ENCODE measurements at regions of chr1 and their contacts with region 1.

Region 1: DNA sequence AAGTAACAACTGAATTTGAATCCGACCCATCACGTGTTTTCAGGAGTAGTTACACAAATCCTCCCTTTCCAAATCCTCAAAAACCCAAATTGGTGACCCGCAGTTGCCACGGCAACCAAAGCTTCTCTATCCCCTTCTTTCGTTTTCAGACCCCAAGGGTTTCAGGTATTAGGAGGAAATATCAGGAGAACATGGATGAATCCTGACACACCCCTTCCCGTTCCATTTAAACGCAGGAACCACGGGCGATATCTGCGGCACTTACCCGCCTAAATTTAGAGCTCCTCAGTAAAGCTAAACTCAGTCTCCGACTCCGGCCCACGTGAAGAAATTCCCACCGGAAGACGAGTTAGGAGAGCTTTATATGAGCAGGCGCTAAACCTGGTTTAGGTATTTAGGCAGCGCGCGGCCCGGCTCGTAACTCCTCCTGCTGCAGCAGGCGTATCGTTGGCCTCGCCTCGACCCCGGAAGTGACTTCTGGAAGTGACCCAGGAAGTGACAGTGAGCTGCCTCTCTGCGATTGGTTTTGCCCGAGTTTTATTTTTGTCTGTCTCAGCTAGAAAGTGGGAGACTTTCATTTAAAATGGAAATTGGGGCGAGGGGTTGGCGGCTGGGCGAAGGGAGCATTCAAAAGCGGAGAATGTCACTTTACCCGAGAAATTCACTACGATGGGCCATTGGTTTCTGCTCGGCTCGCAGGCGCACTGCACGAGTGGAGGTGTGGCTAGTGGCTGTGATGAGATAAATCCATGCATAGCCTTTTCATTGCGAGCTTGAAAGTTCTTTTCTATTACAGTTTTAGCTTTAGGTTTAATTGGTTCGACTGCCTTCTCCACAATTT is at the start of gene TAF1A:
- DNase-seq: peak; percentile 67
- ATAC-seq: peak; percentile 98
- H3K4me3 Mint-ChIP-seq: peak within 1 kb of the TSS; percentile 99
- H3K27ac Mint-ChIP-seq: peak within 1 kb of the TSS; percentile 99
- H3K4me1 Mint-ChIP-seq: peaks cover 57% of the 10 kb centered on the region
- H3K27me3 Mint-ChIP-seq: no peaks in the 10 kb centered on the region
- CTCF ChIP-seq: no peak
- total RNA-seq, gene TAF1A: 15.2 and 19.1 TPM in 2 replicates

Region 2: GRCh38 chr1:222570837-222571236 is 18.8 kb before region 1 on chr1:
- CTCF ChIA-PET with region 1: no interaction called
- POLR2A ChIA-PET with region 1: no interaction called
- intact Hi-C with region 1: loop called (anchors 2 kb)
- DNase-seq: no peak
- ATAC-seq: no peak
- H3K4me3 Mint-ChIP-seq: no peak overlapping the region
- H3K27ac Mint-ChIP-seq: no peak overlapping the region
- H3K4me1 Mint-ChIP-seq: peaks cover 25% of the 10 kb centered on the region
- H3K27me3 Mint-ChIP-seq: no peaks in the 10 kb centered on the region
- CTCF ChIP-seq: no peak

Region 3: GRCh38 chr1:222617367-222617951 is 27.8 kb after region 1 on chr1:
- CTCF ChIA-PET with region 1: no interaction called
- POLR2A ChIA-PET with region 1: interaction called, 13 read pairs
- intact Hi-C with region 1: loop called (anchors 1 kb)
- DNase-seq: peak; percentile 80
- ATAC-seq: peak; percentile 92
- H3K4me3 Mint-ChIP-seq: peak overlapping the region; percentile 93
- H3K27ac Mint-ChIP-seq: peak overlapping the region; percentile 91
- H3K4me1 Mint-ChIP-seq: peaks cover 28% of the 10 kb centered on the region
- H3K27me3 Mint-ChIP-seq: peaks cover 20% of the 10 kb centered on the region
- CTCF ChIP-seq: no peak

Region 4: DNA sequence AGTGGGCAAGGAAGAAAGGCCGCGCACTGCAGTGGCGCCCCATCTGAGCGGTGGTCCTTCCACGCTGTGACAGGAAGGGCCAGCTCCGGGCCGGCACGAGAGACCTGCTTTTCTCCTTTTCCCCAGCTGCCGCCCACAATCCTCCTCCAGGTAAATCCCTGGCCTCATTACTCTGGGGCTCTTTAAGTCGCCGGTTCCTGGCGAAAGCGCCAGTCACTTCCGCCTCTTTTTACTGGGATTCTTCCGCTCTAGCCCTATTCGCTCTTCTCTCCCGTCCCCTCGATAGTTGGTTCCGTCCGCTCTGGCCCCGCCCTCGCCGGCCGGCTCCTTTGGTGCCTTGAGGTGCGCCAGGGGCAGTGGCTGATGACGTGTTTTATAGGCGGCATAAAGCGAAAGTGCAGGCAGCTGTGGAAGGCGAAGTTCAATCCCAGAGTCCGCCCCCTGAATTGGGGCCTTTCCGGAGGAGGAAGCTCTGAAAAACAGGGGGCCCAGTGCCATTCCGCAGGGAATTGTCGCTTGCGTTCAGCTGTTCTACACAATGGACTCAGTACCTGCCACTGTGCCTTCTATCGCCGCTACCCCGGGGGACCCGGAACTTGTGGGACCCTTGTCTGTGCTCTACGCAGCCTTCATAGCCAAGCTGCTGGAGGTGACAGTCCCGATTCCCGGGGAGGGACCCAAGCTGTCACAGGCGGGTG is 54.4 kb after region 1 on chr1:
- CTCF ChIA-PET with region 1: no interaction called
- POLR2A ChIA-PET with region 1: interaction called, 25 read pairs
- intact Hi-C with region 1: loop called (anchors 1 kb)
- DNase-seq: peak; percentile 94
- ATAC-seq: peak; percentile 96
- H3K4me3 Mint-ChIP-seq: peak overlapping the region; percentile 100
- H3K27ac Mint-ChIP-seq: peak overlapping the region; percentile 99
- H3K4me1 Mint-ChIP-seq: peaks cover 25% of the 10 kb centered on the region
- H3K27me3 Mint-ChIP-seq: no peaks in the 10 kb centered on the region
- CTCF ChIP-seq: no peak